WTC11 (cell line): ENCODE measurements at regions of chr6 and their contacts with region 1.

Region 1: DNA sequence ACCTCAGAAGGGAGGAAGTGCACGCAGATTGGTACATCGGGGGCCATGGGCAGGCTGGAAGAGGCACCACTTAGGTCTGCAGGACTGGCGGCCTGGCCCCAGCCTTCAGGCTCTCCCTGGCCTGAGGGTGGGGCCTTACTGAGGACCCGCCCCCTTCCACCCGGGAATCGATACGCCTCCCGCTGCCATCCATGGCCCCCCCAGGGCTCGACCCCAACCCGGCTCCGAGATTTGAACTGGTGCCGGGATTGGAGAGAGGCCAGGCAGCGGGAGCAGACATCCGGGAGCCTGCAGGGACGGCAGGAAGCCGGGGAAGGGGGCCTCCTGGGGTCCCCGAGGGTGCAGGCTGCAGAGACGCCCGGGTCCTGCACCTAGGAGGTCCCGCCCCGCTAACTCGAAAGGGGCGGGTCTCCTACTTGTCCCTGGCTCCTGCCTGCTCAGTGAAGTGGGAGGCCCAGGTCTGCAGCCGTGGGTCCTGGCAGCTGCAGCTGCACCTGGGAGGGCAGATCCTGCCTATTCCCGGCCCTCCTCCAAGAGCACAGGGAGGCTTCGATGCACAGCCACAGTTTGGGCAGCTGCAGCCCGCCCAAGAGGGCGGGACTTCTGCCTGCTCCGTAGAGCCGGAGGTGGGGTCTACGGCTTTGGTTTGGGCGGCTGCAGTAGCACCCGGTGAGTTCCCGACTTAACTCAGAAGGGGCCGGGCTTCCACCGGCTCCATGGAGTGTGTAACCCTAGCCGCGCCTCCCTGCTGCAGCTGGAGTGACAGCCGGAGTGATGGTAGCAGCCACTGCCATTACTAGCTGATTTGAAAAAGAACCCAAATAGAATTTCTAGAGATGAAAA is 35.2 kb upstream of the TBC1D22B start:
- DNase-seq: peak; percentile 94
- ATAC-seq: peak; percentile 96
- H3K4me3 Mint-ChIP-seq: peak overlapping the region; percentile 86
- H3K27ac Mint-ChIP-seq: peak overlapping the region; percentile 91
- H3K4me1 Mint-ChIP-seq: peaks cover 13% of the 10 kb centered on the region
- H3K27me3 Mint-ChIP-seq: no peaks in the 10 kb centered on the region
- CTCF ChIP-seq: no peak

Region 2: GRCh38 chr6:37257634-37258404 is 35.5 kb after region 1 on chr6 and contains the starts of genes TBC1D22B and TMEM217:
- CTCF ChIA-PET with region 1: no interaction called
- POLR2A ChIA-PET with region 1: interaction called, 10 read pairs
- DNase-seq: peak; percentile 99
- ATAC-seq: peak; percentile 99
- H3K4me3 Mint-ChIP-seq: peak within 1 kb of the TSS; percentile 99
- H3K27ac Mint-ChIP-seq: peak within 1 kb of the TSS; percentile 91
- H3K4me1 Mint-ChIP-seq: peaks cover 40% of the 10 kb centered on the region
- H3K27me3 Mint-ChIP-seq: peaks cover 4% of the 10 kb centered on the region
- CTCF ChIP-seq: no peak
- total RNA-seq, gene TBC1D22B: 16.4 to 18.7 TPM (median 16.7 TPM) in 3 replicates
- total RNA-seq, gene TMEM217: 0.55 to 0.99 TPM (median 0.61 TPM) in 3 replicates